Sigmoid colon (tissue), 7 donors: ENCODE measurements at regions of chr20 and their contacts with region 1.

Region 1: GRCh38 chr20:31670371-31671228 is 32.9 kb downstream of the COX4I2 start:
- DNase-seq: peak; percentile 87
- H3K4me3 ChIP-seq: no peak overlapping the region
- H3K27ac ChIP-seq: peak overlapping the region; percentile 68 to 87 (median 76)
- H3K4me1 ChIP-seq: peaks cover 0 to 65% (median 58%) of the 10 kb centered on the region in 4 donors
- H3K27me3 ChIP-seq: no peaks in the 10 kb centered on the region
- CTCF ChIP-seq: no peak
- EP300 ChIP-seq: no peak
- POLR2A ChIP-seq: peak in 1 of 2 donors; percentile 22

Region 2: DNA sequence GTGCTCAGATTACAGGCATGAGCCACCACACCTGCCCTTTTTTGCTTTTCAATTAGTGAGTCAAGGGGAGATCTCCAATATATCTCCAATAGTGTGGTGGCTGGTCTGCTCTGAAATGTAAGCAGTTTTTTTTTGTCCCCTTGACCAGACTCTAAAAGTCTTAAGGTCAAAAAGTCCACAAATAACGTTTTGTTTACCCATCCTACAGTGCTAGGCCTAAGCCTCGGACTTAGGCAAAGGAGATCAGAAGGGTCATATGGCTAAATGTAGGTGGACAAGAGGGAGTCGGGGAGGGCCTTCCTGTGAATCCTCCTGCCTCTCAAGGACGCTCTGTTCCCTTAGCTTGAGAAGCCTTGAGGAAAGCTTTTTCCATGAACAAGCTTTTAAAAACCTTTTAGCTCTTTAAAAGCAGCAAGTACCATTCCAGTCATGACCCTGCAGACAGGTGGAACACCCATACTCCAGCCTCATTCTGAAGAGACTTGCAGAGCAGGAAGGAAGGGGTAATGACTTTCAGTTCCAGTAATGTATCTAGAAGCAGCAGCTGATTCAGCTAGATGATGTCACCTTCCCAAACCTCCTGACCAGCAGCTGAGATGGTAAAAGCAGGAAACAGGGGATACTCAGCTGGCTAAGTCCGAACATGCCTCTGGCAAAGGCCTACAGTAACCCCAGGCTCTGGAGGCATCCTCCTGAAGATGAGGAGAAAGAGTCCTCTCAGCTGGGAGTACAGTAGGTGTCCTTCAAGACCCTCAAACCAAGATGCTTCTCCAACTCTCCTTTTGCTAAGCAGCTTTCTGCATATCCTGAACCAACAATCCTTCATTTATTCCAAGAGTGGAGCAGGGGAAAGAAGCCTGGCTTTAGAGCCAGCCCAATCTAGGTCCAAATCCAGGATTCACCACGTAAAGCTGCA is 28.5 kb after region 1 on chr20:
- intact Hi-C with region 1: loop called (anchors 2 kb)
- DNase-seq: peak; percentile 86
- H3K4me3 ChIP-seq: no peak overlapping the region
- H3K27ac ChIP-seq: peak overlapping the region; percentile 41 to 79 (median 72)
- H3K4me1 ChIP-seq: peaks cover 0 to 38% (median 24%) of the 10 kb centered on the region in 4 donors
- H3K27me3 ChIP-seq: no peaks in the 10 kb centered on the region
- CTCF ChIP-seq: no peak
- EP300 ChIP-seq: peak in 2 of 4 donors; percentile 33 to 73
- POLR2A ChIP-seq: no peak

Region 3: GRCh38 chr20:31712564-31713311 is 42.1 kb after region 1 on chr20:
- intact Hi-C with region 1: loop called (anchors 2 kb)
- DNase-seq: peak; percentile 97
- H3K4me3 ChIP-seq: peak overlapping the region in 3 of 4 donors; percentile 11 to 30 (median 15)
- H3K27ac ChIP-seq: peak overlapping the region; percentile 80 to 99 (median 85)
- H3K4me1 ChIP-seq: peaks cover 0 to 84% (median 76%) of the 10 kb centered on the region in 4 donors
- H3K27me3 ChIP-seq: no peaks in the 10 kb centered on the region
- CTCF ChIP-seq: no peak
- EP300 ChIP-seq: peak; percentile 94 to 98 (median 96)
- POLR2A ChIP-seq: no peak